Mammary epithelial cell (primary cell): ENCODE measurements at regions of chr2 and their contacts with region 1.

Region 1: DNA sequence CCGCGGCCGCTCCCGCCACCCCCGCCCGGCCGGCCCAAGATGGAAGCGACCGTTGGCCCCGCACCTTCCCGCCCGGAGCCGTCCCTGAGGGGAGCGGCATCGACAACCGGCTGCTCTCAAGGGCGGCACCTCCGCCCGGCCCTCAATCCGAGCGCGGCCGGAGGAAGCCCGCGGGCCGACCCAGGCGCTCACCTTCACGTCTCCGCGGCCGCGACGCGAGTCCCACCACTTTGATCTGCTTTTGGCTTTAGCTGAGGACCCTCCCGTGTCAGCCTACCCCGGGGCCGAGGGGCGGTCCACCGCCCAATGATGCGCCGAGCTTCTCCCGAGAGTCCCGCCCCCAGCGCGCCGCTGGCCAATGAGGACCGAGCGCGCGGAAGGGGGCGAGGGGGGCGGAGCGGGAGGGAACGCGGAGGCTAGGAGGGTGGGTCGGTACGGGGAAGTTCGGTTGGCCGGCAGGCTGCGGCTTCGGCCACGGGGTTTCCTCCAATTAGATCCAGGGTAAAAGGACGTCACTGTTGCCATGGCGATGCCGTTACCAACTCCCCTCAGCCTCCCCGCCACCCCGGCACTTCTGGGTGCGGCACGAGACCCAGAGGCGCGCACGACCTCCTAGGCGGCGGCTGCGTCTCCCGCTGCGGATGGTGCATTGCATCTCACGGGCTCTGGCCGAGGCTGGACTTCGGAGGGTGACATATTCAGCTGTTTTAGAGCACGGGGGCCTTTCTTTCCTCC is at the start of gene YWHAQ:
- DNase-seq: peak; percentile 99
- H3K4me3 ChIP-seq: peak within 1 kb of the TSS; percentile 88 to 89 (median 88)
- H3K27ac ChIP-seq: peak within 1 kb of the TSS; percentile 82
- H3K4me1 ChIP-seq: peaks cover 28% of the 10 kb centered on the region
- H3K27me3 ChIP-seq: no peaks in the 10 kb centered on the region
- CTCF ChIP-seq: no peak
- total RNA-seq, gene YWHAQ: 326 to 442 TPM

Region 2: GRCh38 chr2:9555297-9556141 is 75.4 kb before region 1 on chr2 and contains the start of gene ADAM17:
- CTCF ChIA-PET with region 1: no interaction called
- dilution Hi-C with region 1: loop called (anchors 5 kb)
- in situ Hi-C with region 1: no loop called
- intact Hi-C with region 1: loop called (anchors 1 kb)
- DNase-seq: peak; percentile 98
- H3K4me3 ChIP-seq: peak within 1 kb of the TSS; percentile 60 to 98 (median 94)
- H3K27ac ChIP-seq: peak within 1 kb of the TSS; percentile 89
- H3K4me1 ChIP-seq: peaks cover 31% of the 10 kb centered on the region
- H3K27me3 ChIP-seq: no peaks in the 10 kb centered on the region
- CTCF ChIP-seq: peak; percentile 27 to 47
- total RNA-seq, gene ADAM17: 39.5 to 74.3 TPM

Region 3: GRCh38 chr2:9675415-9676351 is 44.8 kb after region 1 on chr2:
- CTCF ChIA-PET with region 1: no interaction called
- dilution Hi-C with region 1: no loop called
- in situ Hi-C with region 1: no loop called
- intact Hi-C with region 1: loop called (anchors 2 kb)
- DNase-seq: peak; percentile 91
- H3K4me3 ChIP-seq: peak overlapping the region; percentile 20 to 39 (median 24)
- H3K27ac ChIP-seq: peak overlapping the region; percentile 71
- H3K4me1 ChIP-seq: peaks cover 26% of the 10 kb centered on the region
- H3K27me3 ChIP-seq: no peaks in the 10 kb centered on the region
- CTCF ChIP-seq: no peak

Region 4: GRCh38 chr2:9693211-9693520 is 62.2 kb after region 1 on chr2:
- CTCF ChIA-PET with region 1: no interaction called
- dilution Hi-C with region 1: loop called (anchors 10 kb)
- in situ Hi-C with region 1: no loop called
- intact Hi-C with region 1: no loop called
- DNase-seq: peak; percentile 47
- H3K4me3 ChIP-seq: no peak overlapping the region
- H3K27ac ChIP-seq: no peak overlapping the region
- H3K4me1 ChIP-seq: peaks cover 13% of the 10 kb centered on the region
- H3K27me3 ChIP-seq: no peaks in the 10 kb centered on the region
- CTCF ChIP-seq: no peak

Region 5: GRCh38 chr2:9703085-9703641 is 72.2 kb after region 1 on chr2:
- CTCF ChIA-PET with region 1: no interaction called
- dilution Hi-C with region 1: loop called (anchors 10 kb)
- in situ Hi-C with region 1: no loop called
- intact Hi-C with region 1: loop called (anchors 1 kb)
- DNase-seq: peak; percentile 94
- H3K4me3 ChIP-seq: no peak overlapping the region
- H3K27ac ChIP-seq: peak overlapping the region; percentile 25
- H3K4me1 ChIP-seq: peaks cover 29% of the 10 kb centered on the region
- H3K27me3 ChIP-seq: no peaks in the 10 kb centered on the region
- CTCF ChIP-seq: no peak

Region 6: DNA sequence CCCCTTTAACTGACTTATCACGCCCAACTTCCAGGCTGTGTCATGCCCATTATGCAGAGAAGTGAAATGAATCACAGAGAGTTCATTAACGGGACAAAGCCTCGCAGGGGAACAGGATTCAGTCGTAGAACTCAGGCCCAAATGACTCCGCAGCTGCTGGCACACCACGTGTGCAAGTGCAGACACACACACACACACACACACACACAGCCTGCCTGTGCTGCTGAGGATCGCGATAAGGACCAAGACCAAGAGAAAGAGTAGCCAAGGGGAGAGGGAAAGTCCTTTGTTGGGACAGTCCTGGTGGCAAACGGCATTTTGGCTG is 122.3 kb after region 1 on chr2:
- CTCF ChIA-PET with region 1: no interaction called
- dilution Hi-C with region 1: no loop called
- in situ Hi-C with region 1: loop called in 1 of 2 experiments (anchors 10 kb)
- intact Hi-C with region 1: loop called (anchors 1 kb)
- DNase-seq: peak; percentile 98
- H3K4me3 ChIP-seq: peak overlapping the region; percentile 35 to 53 (median 45)
- H3K27ac ChIP-seq: peak overlapping the region; percentile 98
- H3K4me1 ChIP-seq: peaks cover 42% of the 10 kb centered on the region
- H3K27me3 ChIP-seq: no peaks in the 10 kb centered on the region
- CTCF ChIP-seq: no peak

Region 7: DNA sequence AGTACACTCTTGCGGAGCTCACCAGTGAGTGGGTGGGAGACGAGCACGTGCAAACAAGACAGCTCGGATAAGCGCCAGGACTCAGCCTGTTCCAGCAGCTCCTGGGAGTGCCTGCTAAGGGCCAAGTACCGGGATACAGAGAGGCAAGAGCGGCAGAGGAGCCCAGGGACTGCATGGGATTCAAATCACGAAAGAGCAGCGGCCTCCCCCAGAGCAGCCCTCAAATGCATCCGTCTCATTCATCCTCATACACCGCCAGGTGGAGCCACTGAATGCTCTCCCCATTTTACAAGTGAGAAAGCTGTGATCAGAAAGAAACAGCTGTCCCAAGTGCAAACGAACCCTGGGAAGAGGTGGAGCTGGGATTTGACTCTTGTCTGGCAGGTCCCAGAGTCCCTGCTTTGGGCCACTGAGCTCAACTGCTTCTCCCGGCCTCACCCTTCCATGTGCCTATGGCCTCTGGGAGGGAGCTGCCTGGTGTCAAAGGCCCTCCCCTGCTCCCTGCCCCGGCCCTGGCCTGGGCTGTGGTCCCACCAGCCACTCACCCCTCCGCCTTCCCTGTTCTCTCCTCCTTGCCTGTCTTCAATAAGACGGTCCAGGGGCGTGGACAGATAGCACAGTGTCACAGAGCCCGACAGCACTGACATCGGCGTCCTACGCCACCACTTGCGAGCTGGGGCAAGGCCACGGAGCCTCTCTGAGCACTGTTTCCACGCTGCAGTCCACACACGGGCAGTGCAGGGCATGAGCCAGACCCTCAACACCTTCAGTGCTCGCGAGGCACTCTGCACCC is 139.6 kb after region 1 on chr2:
- CTCF ChIA-PET with region 1: no interaction called
- dilution Hi-C with region 1: no loop called
- in situ Hi-C with region 1: no loop called
- intact Hi-C with region 1: loop called (anchors 1 kb)
- DNase-seq: peak; percentile 73
- H3K4me3 ChIP-seq: no peak overlapping the region
- H3K27ac ChIP-seq: peak overlapping the region; percentile 27
- H3K4me1 ChIP-seq: peaks cover 44% of the 10 kb centered on the region
- H3K27me3 ChIP-seq: no peaks in the 10 kb centered on the region
- CTCF ChIP-seq: peak; percentile 68 to 78